ENCODE measurements at regions of chr17 and their contacts with region 1.

Region 1: GRCh38 chr17:8314797-8315763 is 5.0 kb downstream of the ARHGEF15 start:
- DNase-seq: no peak

Region 2: DNA sequence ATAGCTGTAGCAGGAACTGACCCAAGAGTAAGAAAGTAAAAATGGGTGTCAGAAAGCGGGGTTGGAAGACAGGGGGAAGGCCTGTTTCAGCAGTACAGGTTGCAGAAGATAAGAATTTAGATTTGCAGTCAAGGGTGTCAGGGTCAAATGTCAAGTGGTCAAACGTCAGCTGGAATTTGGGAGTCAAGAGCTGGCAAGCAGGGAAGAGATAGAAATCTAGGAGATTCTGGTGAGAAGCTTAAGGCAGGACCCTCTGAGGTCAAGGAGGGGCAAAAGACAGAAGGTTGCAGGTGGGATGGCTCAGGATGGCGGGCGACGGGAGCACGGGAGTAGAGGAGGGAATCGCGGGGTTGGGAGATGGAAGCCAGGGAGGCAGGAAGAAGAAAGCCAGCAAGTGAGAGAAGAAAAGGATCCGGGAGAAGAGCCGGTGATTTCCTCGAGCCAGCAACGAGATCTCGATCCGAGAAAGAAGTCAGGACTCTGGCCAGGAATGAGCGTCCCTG is 20.2 kb before region 1 on chr17:
- CTCF ChIA-PET with region 1: no interaction called
- POLR2A ChIA-PET with region 1: interaction called, 13 read pairs
- DNase-seq: no peak

Region 3: GRCh38 chr17:8337802-8338752 is 23.0 kb after region 1 on chr17:
- CTCF ChIA-PET with region 1: no interaction called
- POLR2A ChIA-PET with region 1: no interaction called
- DNase-seq: no peak